WTC11 (cell line): ENCODE measurements at regions of chr2 and their contacts with region 1.

Region 1: DNA sequence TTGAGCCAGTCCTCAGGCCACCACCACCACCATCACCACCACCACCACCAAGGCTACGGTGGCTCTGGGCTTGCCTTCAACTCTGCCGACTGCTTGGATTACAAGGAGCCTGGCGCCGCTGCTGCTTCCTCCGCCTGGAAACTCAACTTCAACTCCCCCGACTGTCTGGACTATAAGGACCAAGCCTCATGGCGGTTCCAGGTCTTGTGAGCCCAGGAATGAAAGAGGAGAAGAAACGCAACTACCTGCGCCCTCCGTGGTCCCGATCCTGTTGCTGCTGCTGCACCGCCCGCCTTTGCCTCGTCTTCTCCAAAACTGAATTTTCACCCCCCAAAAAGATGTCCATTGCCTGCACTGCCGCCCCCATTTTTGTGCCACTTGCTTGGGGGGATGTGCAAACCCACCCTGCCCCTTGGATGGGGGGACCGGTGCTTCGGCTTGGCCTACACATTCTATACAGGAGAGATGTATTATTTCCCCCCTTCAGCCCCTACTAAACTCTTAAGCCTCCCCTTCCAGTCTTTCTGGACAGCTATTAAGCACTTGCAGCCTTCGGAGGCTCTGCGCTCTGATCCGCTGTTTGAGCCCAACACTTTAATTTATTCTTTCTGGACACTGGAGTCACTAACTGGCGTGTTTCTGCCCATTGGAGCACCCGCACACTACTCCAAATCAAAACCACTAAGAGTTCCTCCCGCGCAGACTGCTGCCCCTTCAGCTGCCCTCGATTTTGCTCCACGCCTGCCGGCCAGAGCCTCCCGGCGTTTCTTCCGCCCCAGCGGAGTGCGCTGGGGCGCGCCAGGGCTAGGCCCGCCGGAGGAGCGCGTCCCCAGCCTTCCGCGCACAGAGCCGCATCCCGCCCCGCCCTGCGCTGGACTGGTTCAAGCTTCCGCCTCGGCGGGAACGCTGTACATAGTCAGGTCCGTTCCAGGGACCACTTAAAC is 5.7 kb downstream of the OTX1 start:
- DNase-seq: peak; percentile 58
- ATAC-seq: peak; percentile 5
- H3K4me3 Mint-ChIP-seq: peak overlapping the region; percentile 75
- H3K27ac Mint-ChIP-seq: no peak overlapping the region
- H3K4me1 Mint-ChIP-seq: peaks cover 72% of the 10 kb centered on the region
- H3K27me3 Mint-ChIP-seq: peaks cover 100% of the 10 kb centered on the region
- CTCF ChIP-seq: no peak

Region 2: DNA sequence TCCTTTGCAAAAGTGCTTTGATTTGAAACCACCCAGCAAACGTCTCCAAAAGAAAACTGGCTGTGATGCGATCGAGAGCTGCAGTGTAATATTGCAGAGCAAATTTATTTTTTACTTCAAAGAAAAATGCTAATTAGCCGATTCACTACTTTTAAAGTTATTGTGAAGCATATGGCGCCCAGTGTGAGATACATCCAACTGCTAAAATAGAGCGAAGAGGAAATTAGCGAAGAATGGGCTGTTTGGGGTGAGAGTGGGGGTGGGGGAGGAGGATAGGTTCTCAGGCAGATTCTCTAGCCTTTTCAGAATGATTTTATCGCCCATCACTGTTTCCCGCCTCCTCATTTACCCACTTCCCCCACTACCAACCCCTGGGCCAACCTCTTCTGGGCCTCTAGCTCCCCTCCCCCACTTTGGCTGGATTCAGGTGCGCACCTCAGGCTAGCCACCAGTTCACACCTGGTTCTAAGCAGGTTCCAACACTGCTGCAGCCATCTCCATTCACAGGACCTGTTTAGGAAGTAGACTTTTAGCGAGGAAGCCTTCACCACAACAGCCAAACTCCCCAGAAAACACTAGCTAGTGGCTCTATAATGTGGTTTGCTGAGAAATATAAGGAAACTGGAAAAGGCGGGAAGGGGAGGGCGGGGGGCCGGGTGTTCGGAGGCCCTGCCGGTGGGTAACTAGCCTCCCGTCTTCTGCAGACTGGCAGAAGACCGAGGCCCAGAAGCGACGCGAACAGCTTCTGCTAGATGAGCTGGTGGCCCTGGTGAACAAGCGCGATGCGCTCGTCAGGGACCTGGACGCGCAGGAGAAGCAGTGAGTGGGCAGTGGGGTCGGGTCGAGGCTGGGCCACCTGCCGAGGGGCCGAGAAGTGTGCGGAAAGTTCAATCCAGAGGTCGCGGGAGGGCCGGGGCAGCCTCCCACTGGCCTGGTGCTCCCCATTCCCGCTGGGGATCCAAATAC is 11.7 kb before region 1 on chr2:
- CTCF ChIA-PET with region 1: interaction called, 23 read pairs
- POLR2A ChIA-PET with region 1: interaction called, 9 read pairs
- DNase-seq: peak; percentile 78
- ATAC-seq: peak; percentile 30
- H3K4me3 Mint-ChIP-seq: peak overlapping the region; percentile 78
- H3K27ac Mint-ChIP-seq: peak overlapping the region; percentile 84
- H3K4me1 Mint-ChIP-seq: peaks cover 53% of the 10 kb centered on the region
- H3K27me3 Mint-ChIP-seq: peaks cover 76% of the 10 kb centered on the region
- CTCF ChIP-seq: no peak

Region 3: GRCh38 chr2:63124208-63124607 is 67.8 kb after region 1 on chr2:
- CTCF ChIA-PET with region 1: no interaction called
- POLR2A ChIA-PET with region 1: no interaction called
- DNase-seq: no peak
- ATAC-seq: no peak
- H3K4me3 Mint-ChIP-seq: no peak overlapping the region
- H3K27ac Mint-ChIP-seq: no peak overlapping the region
- H3K4me1 Mint-ChIP-seq: peaks cover 13% of the 10 kb centered on the region
- H3K27me3 Mint-ChIP-seq: no peaks in the 10 kb centered on the region
- CTCF ChIP-seq: no peak

Region 4: DNA sequence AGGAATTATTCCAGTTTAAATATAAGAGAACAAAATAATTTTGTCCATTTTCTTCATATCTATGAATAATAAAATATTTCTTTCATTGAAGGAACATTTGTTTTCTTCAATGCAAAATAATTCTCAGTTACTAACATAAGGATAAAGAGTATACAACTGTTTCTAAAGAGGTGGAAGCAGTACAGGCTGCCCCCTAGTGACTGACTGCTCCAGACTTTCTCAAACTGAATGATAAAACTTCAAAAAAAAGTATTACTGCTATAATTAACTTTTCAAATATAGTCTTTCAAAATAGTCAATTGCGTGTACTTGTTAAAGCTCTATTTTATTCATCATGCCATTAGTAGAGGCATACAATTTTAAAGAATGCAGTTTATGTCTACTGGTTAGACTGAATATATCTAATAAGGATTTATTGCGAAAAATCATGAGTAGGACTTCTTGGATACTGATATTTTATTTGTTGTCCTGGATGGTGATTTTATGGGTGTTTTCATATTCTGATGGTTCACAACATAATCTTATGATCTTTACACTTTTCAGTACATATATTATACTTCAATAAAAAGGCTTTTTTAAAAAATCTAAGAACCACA is 431.8 kb after region 1 on chr2:
- CTCF ChIA-PET with region 1: interaction called, 13 read pairs
- POLR2A ChIA-PET with region 1: no interaction called
- DNase-seq: no peak
- ATAC-seq: no peak
- H3K4me3 Mint-ChIP-seq: no peak overlapping the region
- H3K27ac Mint-ChIP-seq: no peak overlapping the region
- H3K4me1 Mint-ChIP-seq: peaks cover 10% of the 10 kb centered on the region
- H3K27me3 Mint-ChIP-seq: no peaks in the 10 kb centered on the region
- CTCF ChIP-seq: peak; percentile 35; the same call in 1 of the 2 replicates